GM10248 (cell line): ENCODE measurements at regions of chr10 and their contacts with region 1.

Region 1: DNA sequence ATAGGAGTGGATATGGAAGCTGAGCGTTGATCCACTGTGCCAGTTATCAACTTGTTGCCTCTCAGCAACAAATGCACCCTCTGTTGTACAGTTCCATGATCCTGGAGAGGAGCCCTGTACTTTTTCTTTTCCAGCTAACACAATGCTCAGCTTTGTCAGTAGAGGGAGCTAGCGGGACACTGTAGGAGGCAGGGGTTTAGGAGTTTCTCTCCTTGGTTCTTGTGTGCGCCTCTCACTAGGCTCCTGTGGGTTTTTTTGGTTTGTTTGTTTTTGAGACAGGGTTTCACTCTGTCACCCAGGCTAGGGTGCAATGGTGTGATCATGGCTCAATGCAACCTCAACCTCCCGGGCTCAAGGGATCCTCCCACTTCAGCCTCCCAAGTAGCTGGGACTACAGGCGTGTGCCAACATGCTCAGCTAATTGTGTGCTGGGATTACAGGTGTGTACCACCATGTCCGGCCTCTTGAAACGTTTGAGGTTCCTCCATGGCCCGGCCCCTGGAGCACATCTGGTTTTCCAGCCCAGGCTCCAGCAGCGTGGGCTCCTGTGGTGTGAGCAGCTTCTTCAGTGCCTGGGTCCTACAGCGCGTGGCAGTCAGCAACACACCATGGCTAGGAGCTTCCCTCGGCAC is 12.0 kb upstream of the MARVELD1 start:
- DNase-seq: peak; percentile 82
- CTCF ChIP-seq: peak; percentile 89

Region 2: GRCh38 chr10:97584060-97584797 is 117.3 kb before region 1 on chr10 and contains the start of gene HOGA1:
- CTCF ChIA-PET with region 1: no interaction called
- POLR2A ChIA-PET with region 1: no interaction called
- DNase-seq: no peak
- CTCF ChIP-seq: no peak

Region 3: DNA sequence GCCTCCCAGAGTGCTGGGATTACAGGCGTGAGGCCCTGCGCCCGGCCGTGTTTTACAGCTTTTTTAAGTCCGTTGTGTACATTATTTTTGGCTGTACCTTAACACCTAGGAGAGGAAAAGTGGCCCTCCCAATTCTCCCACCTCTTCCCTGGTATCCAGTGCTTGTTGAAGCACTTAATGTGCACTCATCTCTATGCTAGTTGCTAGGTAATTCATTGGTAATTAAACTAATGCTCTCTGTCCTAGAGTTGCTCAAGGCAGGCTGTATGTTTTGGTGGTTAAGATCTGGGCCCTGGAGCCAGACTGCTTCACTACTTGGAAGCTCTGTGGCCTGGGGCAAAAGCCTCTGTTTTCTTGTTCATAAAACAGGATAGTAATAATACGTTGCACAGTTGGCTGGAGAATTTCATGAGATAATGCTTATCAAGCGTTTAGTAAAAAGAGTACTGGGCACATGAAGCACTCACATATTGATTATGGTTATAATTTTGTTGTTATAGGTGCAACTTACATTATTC is 34.0 kb before region 1 on chr10:
- CTCF ChIA-PET with region 1: interaction called, 11 read pairs
- POLR2A ChIA-PET with region 1: no interaction called
- DNase-seq: no peak
- CTCF ChIP-seq: no peak

Region 4: GRCh38 chr10:97676770-97677581 is 24.6 kb before region 1 on chr10:
- CTCF ChIA-PET with region 1: interaction called, 29 read pairs
- POLR2A ChIA-PET with region 1: no interaction called
- DNase-seq: peak; percentile 77
- CTCF ChIP-seq: peak; percentile 69

Region 5: GRCh38 chr10:97714048-97714371 is 12.5 kb after region 1 on chr10:
- CTCF ChIA-PET with region 1: interaction called, 552 read pairs
- POLR2A ChIA-PET with region 1: interaction called, 4 read pairs
- DNase-seq: peak; percentile 80
- CTCF ChIP-seq: peak; percentile 28

Region 6: GRCh38 chr10:97759158-97759887 is 57.8 kb after region 1 on chr10:
- CTCF ChIA-PET with region 1: interaction called, 11 read pairs
- POLR2A ChIA-PET with region 1: no interaction called
- DNase-seq: peak; percentile 72
- CTCF ChIP-seq: peak; percentile 90